BJ (cell line): ENCODE measurements at regions of chr5 and their contacts with region 1.

Region 1: DNA sequence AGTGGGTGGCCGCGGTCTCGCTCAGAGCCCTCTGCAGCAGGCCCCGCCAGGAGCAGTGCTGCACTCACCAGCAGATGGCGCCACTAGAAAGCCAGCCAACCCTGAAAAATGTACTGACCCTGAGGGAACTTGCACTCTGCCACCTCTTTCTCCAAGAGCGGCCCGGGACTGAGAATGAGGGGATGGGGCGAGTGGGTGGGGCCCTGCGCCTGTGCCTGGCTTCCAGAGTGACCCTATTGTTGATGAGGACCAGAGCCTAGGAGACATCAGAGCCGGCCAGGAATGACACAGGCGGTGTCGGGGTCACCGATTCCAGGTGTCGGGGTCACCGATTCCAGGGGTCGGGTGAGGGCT is 2.9 kb upstream of the IL17B start:
- DNase-seq: no peak
- H3K4me3 ChIP-seq: no peak overlapping the region
- H3K27me3 ChIP-seq: peaks cover 1% of the 10 kb centered on the region; the same call in 1 of the 2 replicates
- CTCF ChIP-seq: peak; percentile 95

Region 2: GRCh38 chr5:149400304-149400703 is 18.3 kb after region 1 on chr5:
- CTCF ChIA-PET with region 1: interaction called, 30 read pairs
- POLR2A ChIA-PET with region 1: no interaction called
- DNase-seq: no peak
- H3K4me3 ChIP-seq: no peak overlapping the region
- H3K27me3 ChIP-seq: no peaks in the 10 kb centered on the region
- CTCF ChIP-seq: no peak

Region 3: GRCh38 chr5:149406203-149406978 is 24.4 kb after region 1 on chr5:
- CTCF ChIA-PET with region 1: interaction called, 30 read pairs
- POLR2A ChIA-PET with region 1: interaction called, 9 read pairs
- DNase-seq: peak; percentile 93
- H3K4me3 ChIP-seq: peak overlapping the region; percentile 87
- H3K27me3 ChIP-seq: no peaks in the 10 kb centered on the region
- CTCF ChIP-seq: peak; percentile 35

Region 4: DNA sequence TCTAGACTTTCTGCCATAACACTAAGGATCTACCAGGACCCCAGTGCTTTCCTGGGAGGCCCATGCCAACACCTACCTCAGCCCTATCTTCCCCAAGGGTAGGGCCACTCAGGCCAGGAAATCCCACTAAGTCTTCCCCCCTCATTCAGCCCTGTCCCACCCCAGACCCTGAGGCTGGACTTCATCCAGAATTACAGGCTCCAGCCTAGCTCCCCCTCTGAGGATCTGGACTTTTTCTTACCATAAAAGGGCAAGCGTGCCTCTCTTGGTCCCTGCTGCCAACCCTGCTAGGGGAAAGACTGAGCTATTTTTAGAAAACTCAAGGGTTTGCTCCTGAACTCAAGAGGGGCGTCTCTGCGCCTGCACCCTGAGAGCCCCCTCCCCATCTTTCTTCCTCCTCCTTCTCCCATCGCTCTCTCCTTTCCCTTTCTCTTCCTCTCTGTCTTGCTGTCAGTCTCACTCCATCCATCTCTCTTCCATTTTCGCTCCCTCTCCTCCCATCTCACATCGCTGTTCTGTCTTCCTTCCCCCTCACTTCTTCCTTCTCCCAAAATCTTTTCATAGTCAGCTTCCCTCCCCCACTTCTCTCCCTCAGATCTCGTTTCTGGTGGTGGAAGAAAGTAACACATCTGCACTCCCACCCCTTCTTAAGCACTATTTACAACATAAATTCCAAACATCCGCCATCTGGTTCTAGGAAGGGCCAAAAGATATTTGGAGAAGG is 35.2 kb after region 1 on chr5:
- CTCF ChIA-PET with region 1: interaction called, 22 read pairs
- POLR2A ChIA-PET with region 1: no interaction called
- DNase-seq: no peak
- H3K4me3 ChIP-seq: no peak overlapping the region
- H3K27me3 ChIP-seq: no peaks in the 10 kb centered on the region
- CTCF ChIP-seq: no peak

Region 5: GRCh38 chr5:149422366-149423048 is 40.5 kb after region 1 on chr5:
- CTCF ChIA-PET with region 1: interaction called, 22 read pairs
- POLR2A ChIA-PET with region 1: no interaction called
- DNase-seq: peak; percentile 59
- H3K4me3 ChIP-seq: no peak overlapping the region
- H3K27me3 ChIP-seq: no peaks in the 10 kb centered on the region
- CTCF ChIP-seq: no peak

Region 6: DNA sequence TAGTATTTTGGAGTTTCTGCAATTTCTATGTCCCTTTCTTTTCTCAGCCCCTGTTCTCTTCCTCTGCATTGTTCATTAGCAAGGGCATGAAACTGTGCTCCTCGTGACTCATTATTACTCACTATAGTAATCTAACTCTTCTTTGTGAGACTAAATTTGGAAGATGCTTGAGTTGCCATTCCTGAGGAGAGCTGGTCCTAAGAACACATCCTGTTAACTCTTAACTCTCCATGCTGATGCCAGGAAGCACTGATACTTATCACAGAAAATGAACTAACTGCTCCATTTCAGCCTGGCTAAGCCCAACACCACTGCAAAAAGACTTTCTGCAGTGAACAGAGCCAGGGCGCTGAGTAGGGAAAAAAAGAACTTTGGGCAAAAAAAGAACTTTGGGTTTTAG is 179.9 kb after region 1 on chr5:
- CTCF ChIA-PET with region 1: interaction called, 12 read pairs
- POLR2A ChIA-PET with region 1: no interaction called
- DNase-seq: peak; percentile 80
- H3K4me3 ChIP-seq: no peak overlapping the region
- H3K27me3 ChIP-seq: no peaks in the 10 kb centered on the region
- CTCF ChIP-seq: no peak